HepG2 (cell line): ENCODE measurements at regions of chr5 and their contacts with region 1.

Region 1: GRCh38 chr5:176810084-176810597 is at the start of gene UNC5A:
- DNase-seq: no peak
- ATAC-seq: peak; percentile 52
- H3K4me3 ChIP-seq: peak within 1 kb of the TSS; percentile 40 to 71 (median 41); a peak in 5 of 6 replicates
- H3K27ac ChIP-seq: no peak within 1 kb of the TSS
- H3K4me1 ChIP-seq: peaks cover 11% of the 10 kb centered on the region
- H3K27me3 ChIP-seq: peaks cover 12 to 59% of the 10 kb centered on the region in 2 experiments
- CTCF ChIP-seq: no peak
- EP300 ChIP-seq: no peak
- POLR2A ChIP-seq: no peak
- RAD21 ChIP-seq: no peak
- total RNA-seq, gene UNC5A: not detected in 2 replicates

Region 2: DNA sequence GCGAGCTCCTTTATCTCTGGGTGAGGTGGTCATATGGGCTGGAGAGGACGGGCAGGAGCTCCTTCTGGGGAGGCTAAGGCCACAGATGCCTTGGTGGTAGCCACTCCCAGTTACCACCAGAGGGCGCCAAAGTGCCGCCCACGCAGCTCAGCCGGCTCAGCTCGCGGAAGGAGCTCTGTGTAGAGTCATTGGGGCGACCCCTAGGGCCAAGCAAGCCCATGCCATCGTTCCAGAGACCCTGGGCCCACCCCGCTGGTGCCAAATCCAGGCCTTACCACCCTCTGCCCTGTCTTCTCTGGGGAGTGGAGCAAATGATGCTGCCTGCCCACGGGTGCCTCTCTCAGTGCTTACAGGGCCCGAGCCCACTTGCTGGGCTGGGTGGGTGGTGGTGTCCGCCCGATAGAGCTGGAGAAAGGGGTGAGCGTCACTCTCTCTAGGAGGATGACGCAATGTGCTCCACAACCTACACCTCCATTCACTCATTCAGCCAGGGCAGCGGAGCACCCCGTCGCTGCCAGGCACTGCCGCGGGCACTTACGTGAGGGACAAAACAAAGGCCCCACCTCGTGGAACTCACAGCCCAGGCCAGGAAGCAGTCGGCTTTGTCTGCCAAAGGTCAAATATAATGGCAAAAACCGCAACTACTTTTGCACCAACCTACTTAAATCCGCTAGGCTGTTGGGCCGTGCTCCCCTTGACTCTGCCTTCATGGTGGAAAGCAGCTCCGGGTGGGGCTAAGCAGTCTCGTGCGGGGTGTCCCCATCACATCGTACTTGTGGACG is 149.1 kb before region 1 on chr5:
- CTCF ChIA-PET with region 1: no interaction called
- POLR2A ChIA-PET with region 1: no interaction called
- in situ Hi-C with region 1: no loop called
- intact Hi-C with region 1: loop called (anchors 5 kb)
- DNase-seq: peak; percentile 65
- ATAC-seq: peak; percentile 84
- H3K4me3 ChIP-seq: no peak overlapping the region; a peak in 1 of 6 replicates
- H3K27ac ChIP-seq: no peak overlapping the region
- H3K4me1 ChIP-seq: peaks cover 14% of the 10 kb centered on the region
- H3K27me3 ChIP-seq: peaks cover 5 to 7% of the 10 kb centered on the region in 2 experiments; a peak in 4 of 5 replicates
- CTCF ChIP-seq: peak; percentile 97
- EP300 ChIP-seq: no peak
- POLR2A ChIP-seq: no peak
- RAD21 ChIP-seq: peak; percentile 93

Region 3: GRCh38 chr5:176822041-176822792 is 12.1 kb after region 1 on chr5:
- CTCF ChIA-PET with region 1: no interaction called
- POLR2A ChIA-PET with region 1: no interaction called
- in situ Hi-C with region 1: no loop called
- intact Hi-C with region 1: no loop called
- DNase-seq: no peak
- ATAC-seq: no peak
- H3K4me3 ChIP-seq: no peak overlapping the region
- H3K27ac ChIP-seq: no peak overlapping the region
- H3K4me1 ChIP-seq: peaks cover 38% of the 10 kb centered on the region
- H3K27me3 ChIP-seq: peaks cover 1 to 13% of the 10 kb centered on the region in 2 experiments; a peak in 4 of 5 replicates
- CTCF ChIP-seq: no peak
- EP300 ChIP-seq: no peak
- POLR2A ChIP-seq: no peak
- RAD21 ChIP-seq: no peak